ENCODE measurements at regions of chr5 and their contacts with region 1.

Region 1: DNA sequence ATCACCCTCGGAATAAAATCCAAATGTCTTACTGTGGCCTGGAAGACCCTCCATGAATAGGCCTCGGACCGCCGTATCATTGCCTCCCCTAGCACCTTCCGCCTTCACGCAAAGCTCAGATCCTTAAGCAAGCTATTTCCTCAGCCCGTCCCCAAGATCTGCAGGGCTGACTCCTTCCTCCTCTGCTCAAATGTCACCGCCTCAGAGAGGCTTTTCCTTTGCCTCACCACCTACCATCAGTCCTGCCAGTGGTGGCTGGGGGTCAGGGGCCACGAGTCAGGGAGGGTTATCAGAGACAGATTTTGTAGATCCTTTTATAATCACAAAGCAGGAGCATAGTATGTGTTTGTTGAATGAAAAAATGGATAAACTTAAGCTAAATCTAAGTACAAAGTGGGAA is 74.4 kb upstream of the KIF2A start:
- DNase-seq: no peak
- H3K4me3 ChIP-seq: no peak overlapping the region
- H3K27ac ChIP-seq: no peak overlapping the region
- H3K27me3 ChIP-seq: no peaks in the 10 kb centered on the region
- CTCF ChIP-seq: no peak

Region 2: GRCh38 chr5:61941637-61942036 is 289.9 kb before region 1 on chr5:
- intact Hi-C with region 1: loop called in 1 of 2 experiments (anchors 10 kb)
- DNase-seq: no peak
- H3K4me3 ChIP-seq: no peak overlapping the region
- H3K27ac ChIP-seq: no peak overlapping the region
- H3K27me3 ChIP-seq: no peaks in the 10 kb centered on the region
- CTCF ChIP-seq: peak in 25 of 56 donors; percentile 9 to 52 (median 24)

Region 3: GRCh38 chr5:62315376-62316175 is 84.0 kb after region 1 on chr5:
- intact Hi-C with region 1: no loop called
- DNase-seq: no peak
- H3K4me3 ChIP-seq: no peak overlapping the region
- H3K27ac ChIP-seq: peak overlapping the region in 6 of 59 donors; percentile 13 to 44 (median 26)
- H3K27me3 ChIP-seq: no peaks in the 10 kb centered on the region
- CTCF ChIP-seq: no peak

Region 4: DNA sequence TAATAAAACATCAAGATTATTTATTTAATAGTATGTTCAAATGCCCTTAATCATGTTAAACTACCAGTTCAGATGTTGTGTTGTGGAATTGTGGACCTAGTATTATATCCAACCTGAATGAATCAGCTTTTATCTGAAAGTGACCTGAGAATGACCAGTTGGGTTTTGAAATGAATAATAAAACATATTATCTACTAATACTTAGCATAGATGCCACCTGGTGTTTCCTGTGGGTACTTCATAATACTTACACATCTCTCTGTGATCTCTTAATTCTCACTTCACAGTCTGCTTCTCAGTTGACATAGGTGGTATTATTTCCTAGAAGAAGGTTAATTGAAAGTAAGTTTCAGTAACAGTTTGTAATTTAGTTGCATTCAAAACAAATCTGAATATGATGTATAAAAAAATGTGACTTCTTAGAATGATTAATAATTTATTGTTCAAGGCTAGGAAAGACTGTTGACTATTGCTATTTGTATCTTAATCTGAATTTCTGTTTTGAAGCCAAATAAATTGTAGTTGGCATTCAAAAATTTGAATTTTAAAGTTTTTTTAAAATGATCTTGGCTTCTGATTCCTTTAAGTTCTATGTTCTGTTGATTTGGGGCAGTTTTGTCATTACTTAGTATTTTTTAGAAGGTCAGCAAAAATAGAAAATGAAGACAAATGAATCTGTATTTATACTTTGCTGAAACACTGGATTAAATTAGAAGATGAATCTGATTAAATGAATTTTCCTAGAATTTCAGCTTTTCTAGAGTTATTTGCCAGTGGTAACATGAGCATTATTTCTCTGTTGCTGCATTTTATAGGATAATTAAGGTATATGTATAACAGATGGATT is 122.7 kb after region 1 on chr5:
- intact Hi-C with region 1: loop called in 1 of 2 experiments (anchors 10 kb)
- DNase-seq: no peak
- H3K4me3 ChIP-seq: no peak overlapping the region
- H3K27ac ChIP-seq: peak overlapping the region in 23 of 59 donors; percentile 3 to 68 (median 37)
- H3K27me3 ChIP-seq: no peaks in the 10 kb centered on the region
- CTCF ChIP-seq: peak; percentile 46 to 88 (median 72)

Region 5: DNA sequence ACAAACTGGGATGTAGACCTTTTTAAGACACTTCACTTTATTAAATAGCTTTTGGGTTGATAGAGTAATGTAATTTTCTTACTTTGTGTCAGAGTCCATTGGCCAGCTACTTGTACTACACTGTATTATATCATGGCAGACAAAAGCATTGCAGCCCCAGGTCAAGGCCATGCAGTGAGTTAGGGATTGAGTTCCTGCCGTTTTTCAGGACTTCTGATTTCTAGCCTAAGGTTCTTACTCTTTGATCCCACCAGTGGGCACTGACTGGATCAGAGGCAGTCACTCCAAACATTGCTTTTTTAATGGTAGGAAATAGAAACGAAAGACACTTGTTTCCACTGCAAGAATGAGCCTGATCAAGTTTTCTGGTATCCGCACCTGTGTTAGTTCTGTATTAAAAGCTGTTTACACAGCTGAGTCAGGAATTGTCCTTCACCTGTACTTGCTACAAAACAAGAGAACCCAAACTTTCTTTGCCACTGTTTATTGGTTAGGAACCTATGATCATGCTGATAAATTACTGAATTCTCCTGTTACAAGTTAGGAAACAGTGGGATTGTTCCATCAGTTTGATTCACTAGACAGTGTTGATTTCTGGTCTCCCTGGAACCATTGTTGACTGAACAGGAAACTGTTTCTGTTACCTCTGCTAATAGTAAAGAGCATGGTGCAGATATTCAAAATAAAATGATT is 369.1 kb after region 1 on chr5:
- intact Hi-C with region 1: no loop called
- DNase-seq: no peak
- H3K4me3 ChIP-seq: no peak overlapping the region
- H3K27ac ChIP-seq: peak overlapping the region in 4 of 59 donors; percentile 2 to 36 (median 10)
- H3K27me3 ChIP-seq: no peaks in the 10 kb centered on the region
- CTCF ChIP-seq: no peak